ENCODE measurements at regions of chr3 and their contacts with region 1.

Region 1: DNA sequence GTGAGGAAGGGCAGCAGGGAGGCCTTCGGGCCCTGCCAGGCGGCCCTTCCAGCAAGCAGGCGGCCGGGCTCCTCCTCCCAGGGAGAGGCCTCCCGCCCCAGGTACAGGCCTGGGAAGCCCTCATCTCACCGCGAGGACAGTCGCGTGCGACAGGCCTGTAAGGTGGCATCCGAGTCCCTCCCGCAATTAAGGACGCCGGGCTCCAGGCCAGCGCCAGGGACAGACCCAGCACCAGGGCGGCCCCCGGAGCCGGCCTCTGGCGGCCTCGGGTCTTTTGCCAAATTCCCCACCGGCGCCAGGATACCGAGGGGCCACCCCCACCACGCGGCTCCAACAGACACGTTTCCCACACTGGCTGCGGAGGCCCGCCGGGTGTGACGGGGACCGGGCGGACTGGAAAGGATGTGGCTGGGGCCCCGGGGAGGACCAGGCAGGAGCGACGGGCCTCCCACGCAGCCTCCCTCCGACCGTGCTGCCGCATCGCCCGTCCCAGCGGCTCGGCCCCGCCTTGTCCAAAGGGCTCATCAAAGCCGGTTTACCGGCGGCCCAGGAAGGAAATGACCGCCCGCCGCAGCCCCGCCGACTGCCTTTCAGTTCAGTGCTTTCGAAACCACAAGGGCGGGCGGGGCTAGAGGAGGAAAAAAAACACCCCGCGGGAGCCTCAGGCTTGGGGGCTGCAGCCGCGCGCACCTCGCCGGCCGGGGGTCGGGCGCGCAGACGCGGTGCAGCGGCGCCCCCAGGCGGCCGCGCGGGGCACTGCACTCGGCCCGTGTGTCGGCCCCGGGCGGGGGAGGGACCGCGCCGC is 11.3 kb downstream of the XXYLT1 start:
- DNase-seq: peak; percentile 92 to 95 (median 93)
- H3K4me3 ChIP-seq: peak overlapping the region; percentile 45
- H3K27ac ChIP-seq: peak overlapping the region; percentile 60 to 86
- H3K4me1 ChIP-seq: peaks cover 7% of the 10 kb centered on the region
- H3K27me3 ChIP-seq: no peaks in the 10 kb centered on the region
- CTCF ChIP-seq: peak; percentile 22 to 99 (median 98)
- EP300 ChIP-seq: no peak
- POLR2A ChIP-seq: peak; percentile 85

Region 2: DNA sequence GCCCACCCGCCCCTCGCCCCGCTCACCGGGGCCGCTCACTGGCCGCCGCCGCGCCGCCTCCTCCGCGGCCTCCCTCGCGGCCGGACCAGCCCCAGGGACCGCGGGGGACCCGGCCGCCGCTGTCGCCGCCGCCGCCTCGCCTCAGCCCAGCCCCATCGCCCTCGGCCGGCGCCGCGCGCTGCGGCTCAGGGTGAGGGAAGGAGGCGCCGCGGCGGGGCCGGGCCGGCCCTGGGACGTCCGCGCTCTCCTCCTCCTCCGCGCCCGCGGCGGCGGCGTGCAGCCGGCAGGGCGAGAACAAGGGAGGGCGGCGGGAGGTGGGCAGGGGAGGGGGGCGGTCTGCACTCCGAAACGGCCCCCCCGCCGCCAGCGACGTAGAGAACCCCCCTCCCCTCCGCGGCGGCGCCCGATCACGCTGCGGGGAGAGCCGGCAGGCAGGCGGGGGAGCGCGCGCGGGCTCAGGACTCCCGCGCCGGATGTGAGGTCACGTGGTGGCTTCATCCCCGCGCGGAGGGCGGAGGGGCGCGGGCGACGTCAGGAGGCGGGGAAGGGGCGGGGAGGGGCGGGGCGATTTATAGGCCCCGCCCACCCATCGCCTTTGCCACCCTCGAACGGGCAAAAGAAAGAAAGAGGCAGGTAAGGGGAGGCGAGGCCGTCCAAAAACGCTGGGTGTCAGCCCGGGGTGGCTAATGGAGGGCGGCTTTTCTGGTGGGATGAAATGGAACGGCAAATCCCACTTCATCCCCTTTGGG is 773.0 kb before region 1 on chr3 and contains the start of gene ATP13A3:
- intact Hi-C with region 1: loop called in 1 of 4 experiments (anchors 10 kb)
- DNase-seq: peak; percentile 86 to 93 (median 91)
- H3K4me3 ChIP-seq: peak within 1 kb of the TSS; percentile 88
- H3K27ac ChIP-seq: peak within 1 kb of the TSS; percentile 73 to 77
- H3K4me1 ChIP-seq: peaks cover 10% of the 10 kb centered on the region
- H3K27me3 ChIP-seq: no peaks in the 10 kb centered on the region
- CTCF ChIP-seq: no peak
- EP300 ChIP-seq: no peak
- POLR2A ChIP-seq: peak; percentile 78
- total RNA-seq, gene ATP13A3: 41.5 to 101 (median 53.4) TPM

Region 3: DNA sequence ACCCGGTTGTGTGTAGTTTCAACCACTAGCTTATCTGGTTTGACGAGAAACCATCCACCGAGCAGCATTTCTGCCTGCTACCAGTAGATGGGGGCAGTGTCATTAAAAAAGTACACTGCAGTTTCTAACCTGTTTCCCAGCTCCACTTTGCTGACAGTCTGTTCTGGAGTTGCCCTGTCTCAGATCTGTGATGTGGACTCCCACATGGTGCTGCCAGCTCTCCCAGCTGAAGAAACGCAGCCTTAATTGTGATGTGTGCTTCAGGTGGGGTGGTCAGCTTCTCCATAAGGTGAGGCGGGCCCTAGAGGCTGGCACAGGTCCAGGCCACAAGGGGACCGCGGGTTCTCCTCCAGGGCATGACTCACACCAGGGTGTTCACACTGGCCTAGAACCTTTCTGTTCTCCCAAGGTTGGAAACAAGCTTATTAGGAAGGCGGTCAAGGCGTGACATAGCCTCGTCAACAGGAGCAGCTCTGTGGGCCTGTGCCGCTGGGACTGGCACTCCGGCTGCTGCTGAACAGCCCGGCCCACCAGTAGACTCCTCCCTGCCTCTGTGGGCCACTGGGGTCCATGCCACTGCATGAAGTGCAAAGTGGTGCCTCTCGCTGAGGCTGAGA is 576.9 kb before region 1 on chr3:
- intact Hi-C with region 1: loop called (anchors 2 to 5 kb)
- DNase-seq: peak; percentile 54 to 75 (median 68)
- H3K4me3 ChIP-seq: no peak overlapping the region
- H3K27ac ChIP-seq: no peak overlapping the region
- H3K4me1 ChIP-seq: peaks cover 5% of the 10 kb centered on the region
- H3K27me3 ChIP-seq: no peaks in the 10 kb centered on the region
- CTCF ChIP-seq: peak; percentile 76 to 87 (median 81)
- EP300 ChIP-seq: no peak
- POLR2A ChIP-seq: no peak

Region 4: GRCh38 chr3:194773216-194773615 is 486.5 kb before region 1 on chr3:
- intact Hi-C with region 1: loop called in 1 of 4 experiments (anchors 10 kb)
- DNase-seq: no peak
- H3K4me3 ChIP-seq: no peak overlapping the region
- H3K27ac ChIP-seq: no peak overlapping the region
- H3K4me1 ChIP-seq: peaks cover 3% of the 10 kb centered on the region
- H3K27me3 ChIP-seq: no peaks in the 10 kb centered on the region
- CTCF ChIP-seq: no peak
- EP300 ChIP-seq: no peak
- POLR2A ChIP-seq: no peak

Region 5: GRCh38 chr3:194952841-194953241 is 306.8 kb before region 1 on chr3:
- intact Hi-C with region 1: no loop called
- DNase-seq: no peak
- H3K4me3 ChIP-seq: no peak overlapping the region
- H3K27ac ChIP-seq: no peak overlapping the region
- H3K4me1 ChIP-seq: no peaks in the 10 kb centered on the region
- H3K27me3 ChIP-seq: no peaks in the 10 kb centered on the region
- CTCF ChIP-seq: no peak
- EP300 ChIP-seq: no peak
- POLR2A ChIP-seq: no peak

Region 6: GRCh38 chr3:195129644-195130492 is 129.8 kb before region 1 on chr3:
- intact Hi-C with region 1: loop called in 2 of 4 experiments (anchors 10 kb)
- DNase-seq: no peak
- H3K4me3 ChIP-seq: no peak overlapping the region
- H3K27ac ChIP-seq: no peak overlapping the region
- H3K4me1 ChIP-seq: no peaks in the 10 kb centered on the region
- H3K27me3 ChIP-seq: no peaks in the 10 kb centered on the region
- CTCF ChIP-seq: no peak
- EP300 ChIP-seq: no peak
- POLR2A ChIP-seq: no peak

Region 7: GRCh38 chr3:195147649-195148095 is 112.0 kb before region 1 on chr3:
- intact Hi-C with region 1: loop called in 3 of 4 experiments (anchors 10 kb)
- DNase-seq: no peak
- H3K4me3 ChIP-seq: no peak overlapping the region
- H3K27ac ChIP-seq: no peak overlapping the region
- H3K4me1 ChIP-seq: peaks cover 2% of the 10 kb centered on the region
- H3K27me3 ChIP-seq: no peaks in the 10 kb centered on the region
- CTCF ChIP-seq: no peak
- EP300 ChIP-seq: no peak
- POLR2A ChIP-seq: no peak

Region 8: DNA sequence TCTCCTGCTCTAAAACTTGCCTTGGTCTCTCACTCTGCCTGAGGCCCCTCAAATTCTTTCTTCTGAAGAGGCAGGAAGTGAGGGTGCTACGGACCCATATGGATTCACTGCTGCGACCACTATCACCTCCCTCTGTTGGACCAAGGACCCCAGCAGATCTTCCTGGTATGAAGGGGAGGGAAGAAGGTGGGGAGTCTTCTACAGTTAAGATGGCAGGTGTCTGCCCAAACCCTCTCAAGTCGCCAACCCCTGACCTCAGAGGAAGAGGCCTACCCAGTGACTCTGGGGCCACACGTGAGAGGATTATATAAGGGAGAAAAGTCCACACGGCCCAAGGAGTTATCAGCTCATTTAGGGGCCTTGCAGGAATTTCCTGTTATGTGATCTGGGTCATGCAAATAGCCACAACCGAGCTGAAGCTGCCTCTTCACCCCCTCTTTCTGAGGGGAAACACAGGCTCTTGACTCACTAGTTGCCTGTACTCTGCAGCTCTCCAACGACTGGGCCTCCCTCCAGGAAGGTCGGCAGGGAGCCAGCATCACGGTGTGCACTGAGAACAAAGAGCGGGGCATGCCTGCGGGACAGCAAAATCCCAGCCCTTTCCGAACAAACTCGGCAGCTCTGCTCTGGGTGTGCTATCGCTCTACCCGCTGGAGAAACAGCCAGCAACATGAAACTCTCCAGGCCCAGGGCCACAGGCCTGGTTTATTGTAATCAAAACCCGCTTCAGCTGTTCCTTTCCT is 104.7 kb before region 1 on chr3:
- intact Hi-C with region 1: loop called in 2 of 4 experiments (anchors 10 kb)
- DNase-seq: peak; percentile 89 to 98 (median 92)
- H3K4me3 ChIP-seq: no peak overlapping the region
- H3K27ac ChIP-seq: peak overlapping the region; percentile 48 to 74
- H3K4me1 ChIP-seq: peaks cover 12% of the 10 kb centered on the region
- H3K27me3 ChIP-seq: no peaks in the 10 kb centered on the region
- CTCF ChIP-seq: no peak
- EP300 ChIP-seq: no peak
- POLR2A ChIP-seq: no peak

Region 9: GRCh38 chr3:195319060-195319459 is 59.4 kb after region 1 on chr3:
- intact Hi-C with region 1: no loop called
- DNase-seq: no peak
- H3K4me3 ChIP-seq: no peak overlapping the region
- H3K27ac ChIP-seq: no peak overlapping the region
- H3K4me1 ChIP-seq: no peaks in the 10 kb centered on the region
- H3K27me3 ChIP-seq: no peaks in the 10 kb centered on the region
- CTCF ChIP-seq: no peak
- EP300 ChIP-seq: no peak
- POLR2A ChIP-seq: no peak